ENCODE measurements at regions of chr13 and their contacts with region 1.

Region 1: GRCh38 chr13:49265822-49266221 is 18.1 kb downstream of the CDADC1 start:
- DNase-seq: no peak
- H3K4me3 Mint-ChIP-seq: no peak overlapping the region
- H3K27ac Mint-ChIP-seq: no peak overlapping the region
- H3K4me1 Mint-ChIP-seq: no peaks in the 10 kb centered on the region
- H3K27me3 Mint-ChIP-seq: no peaks in the 10 kb centered on the region
- CTCF ChIP-seq: no peak

Region 2: GRCh38 chr13:49146950-49147355 is 118.9 kb before region 1 on chr13:
- CTCF ChIA-PET with region 1: no interaction called
- POLR2A ChIA-PET with region 1: no interaction called
- intact Hi-C with region 1: no loop called
- DNase-seq: no peak
- H3K4me3 Mint-ChIP-seq: no peak overlapping the region
- H3K27ac Mint-ChIP-seq: no peak overlapping the region
- H3K4me1 Mint-ChIP-seq: no peaks in the 10 kb centered on the region
- H3K27me3 Mint-ChIP-seq: no peaks in the 10 kb centered on the region
- CTCF ChIP-seq: no peak

Region 3: DNA sequence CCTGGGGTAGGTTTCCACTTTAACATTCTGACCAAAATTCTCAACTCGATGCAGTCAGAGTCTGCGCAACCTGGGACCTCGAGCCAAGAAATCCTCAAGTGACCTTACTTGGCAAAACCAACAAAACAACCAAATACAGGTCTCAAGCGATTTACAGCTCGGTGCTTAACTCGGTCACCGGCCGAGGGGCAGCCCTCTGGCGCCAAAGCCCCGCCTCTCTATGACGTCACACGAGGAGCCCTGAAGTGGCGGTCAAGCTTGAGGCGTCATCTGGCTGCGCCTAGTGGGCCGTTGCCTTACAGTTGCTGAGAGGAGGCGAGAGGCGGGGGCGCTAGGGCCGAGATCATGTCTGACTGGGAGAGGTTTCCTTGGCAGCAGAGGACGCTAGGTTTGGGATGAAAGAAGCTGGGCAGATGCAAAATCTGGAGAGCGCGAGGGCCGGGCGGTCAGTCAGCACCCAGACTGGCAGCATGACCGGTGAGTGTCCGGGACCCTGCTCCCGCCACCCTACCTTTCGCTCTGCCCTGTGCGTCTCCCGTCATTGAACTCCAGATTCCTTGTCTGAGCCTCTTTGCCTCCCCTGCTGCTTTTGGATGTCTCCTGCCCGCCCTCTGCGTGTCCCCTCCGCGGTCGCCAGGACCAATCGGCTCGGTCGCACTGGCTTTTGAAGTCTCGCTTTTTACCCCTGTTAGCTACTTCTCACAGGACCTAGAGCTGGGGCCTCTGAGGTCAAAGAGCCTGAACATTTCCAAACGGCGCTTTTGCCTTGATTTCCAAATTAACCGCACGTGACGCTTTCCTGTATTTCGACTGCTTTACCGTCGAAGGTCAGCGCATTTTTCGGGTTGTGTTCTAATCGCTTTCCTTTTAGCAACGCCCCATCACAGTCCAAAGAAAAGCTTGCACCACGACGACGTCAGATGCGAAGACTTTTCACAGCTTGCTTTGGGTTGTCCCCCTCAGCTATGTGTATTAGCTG is 17.9 kb before region 1 on chr13 and contains the start of gene CDADC1:
- CTCF ChIA-PET with region 1: interaction called, 4 read pairs
- POLR2A ChIA-PET with region 1: interaction called, 10 read pairs
- intact Hi-C with region 1: no loop called
- DNase-seq: peak; percentile 95
- H3K4me3 Mint-ChIP-seq: peak within 1 kb of the TSS; percentile 96
- H3K27ac Mint-ChIP-seq: peak within 1 kb of the TSS; percentile 97
- H3K4me1 Mint-ChIP-seq: peaks cover 6% of the 10 kb centered on the region
- H3K27me3 Mint-ChIP-seq: no peaks in the 10 kb centered on the region
- CTCF ChIP-seq: no peak
- total RNA-seq, gene CDADC1: 8.0 and 9.4 TPM in 2 replicates

Measured in MCF 10A (cell line).